ENCODE measurements at regions of chr10 and their contacts with region 1.

Region 1: DNA sequence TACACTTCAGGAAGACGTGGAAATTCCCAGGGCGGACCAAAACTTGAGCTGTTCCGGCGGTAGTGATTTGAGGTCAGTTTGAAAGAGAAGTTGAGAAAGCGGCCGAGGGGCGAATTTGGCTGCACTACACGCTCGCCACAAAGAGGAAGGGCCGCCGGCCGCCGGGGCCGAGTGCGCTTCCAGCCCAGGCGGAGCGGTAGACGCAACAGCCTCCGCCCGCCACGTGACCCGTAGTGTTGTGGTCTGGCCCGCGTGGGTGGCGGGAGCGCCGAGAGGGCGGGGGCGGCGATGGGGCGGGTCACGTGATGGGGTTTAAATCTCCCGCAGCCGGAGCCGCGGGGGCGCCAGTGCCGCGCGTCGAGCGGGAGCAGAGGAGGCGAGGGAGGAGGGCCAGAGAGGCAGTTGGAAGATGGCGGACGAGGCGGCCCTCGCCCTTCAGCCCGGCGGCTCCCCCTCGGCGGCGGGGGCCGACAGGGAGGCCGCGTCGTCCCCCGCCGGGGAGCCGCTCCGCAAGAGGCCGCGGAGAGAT is at the start of gene SIRT1:
- H3K4me3 ChIP-seq: peak within 1 kb of the TSS; percentile 75
- H3K27ac ChIP-seq: peak within 1 kb of the TSS; percentile 98
- H3K4me1 ChIP-seq: peaks cover 5% of the 10 kb centered on the region; the same call in 1 of the 2 replicates
- CTCF ChIP-seq: peak; percentile 47; the same call in 1 of the 2 replicates

Region 2: DNA sequence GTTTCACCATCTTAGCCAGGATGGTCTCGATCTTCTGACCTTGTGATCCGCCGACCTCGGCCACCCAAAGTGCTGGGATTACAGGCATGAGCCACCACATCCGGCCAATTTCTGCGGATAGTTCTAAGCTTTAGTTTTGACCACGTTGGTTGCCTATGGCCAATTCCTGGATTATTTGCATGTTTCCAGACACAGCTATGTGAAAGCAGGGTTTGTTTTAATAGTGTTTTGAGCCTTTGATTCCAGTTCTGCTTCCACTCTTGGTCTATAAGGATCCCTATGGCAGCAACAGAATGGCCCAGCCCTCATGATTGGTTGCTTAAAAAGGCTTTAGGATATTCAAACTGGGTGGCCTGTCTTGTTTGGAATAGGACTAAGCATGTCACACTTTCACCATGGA is 19.2 kb after region 1 on chr10:
- CTCF ChIA-PET with region 1: no interaction called
- POLR2A ChIA-PET with region 1: interaction called, 14 read pairs
- H3K4me3 ChIP-seq: no peak overlapping the region
- H3K27ac ChIP-seq: no peak overlapping the region
- H3K4me1 ChIP-seq: no peaks in the 10 kb centered on the region
- CTCF ChIP-seq: no peak

Region 3: GRCh38 chr10:67976292-67977245 is 92.2 kb after region 1 on chr10:
- CTCF ChIA-PET with region 1: no interaction called
- POLR2A ChIA-PET with region 1: no interaction called
- H3K4me3 ChIP-seq: no peak overlapping the region
- H3K27ac ChIP-seq: no peak overlapping the region
- H3K4me1 ChIP-seq: no peaks in the 10 kb centered on the region
- CTCF ChIP-seq: no peak

Region 4: GRCh38 chr10:68001539-68001938 is 117.2 kb after region 1 on chr10:
- CTCF ChIA-PET with region 1: no interaction called
- POLR2A ChIA-PET with region 1: no interaction called
- H3K4me3 ChIP-seq: no peak overlapping the region
- H3K27ac ChIP-seq: no peak overlapping the region
- H3K4me1 ChIP-seq: no peaks in the 10 kb centered on the region
- CTCF ChIP-seq: no peak